HEK293T (cell line): ENCODE measurements at regions of chr10 and their contacts with region 1.

Region 1: GRCh38 chr10:90288391-90288933 is 569.4 kb downstream of the HTR7 start:
- DNase-seq: no peak

Region 2: GRCh38 chr10:90592638-90593302 is 304.3 kb after region 1 on chr10:
- CTCF ChIA-PET with region 1: interaction called, 14 read pairs
- POLR2A ChIA-PET with region 1: no interaction called
- DNase-seq: peak; percentile 54